Heart left ventricle (tissue), 16 donors: ENCODE measurements at regions of chr15 and their contacts with region 1.

Region 1: GRCh38 chr15:56491110-56491722 is 26.3 kb upstream of the MNS1 start:
- DNase-seq: peak; percentile 29 to 60 (median 42)
- ATAC-seq: peak in 2 of 4 donors; percentile 59 to 76
- H3K4me3 ChIP-seq: no peak overlapping the region
- H3K27ac ChIP-seq: no peak overlapping the region
- H3K4me1 ChIP-seq: no peaks in the 10 kb centered on the region
- H3K27me3 ChIP-seq: no peaks in the 10 kb centered on the region
- CTCF ChIP-seq: peak; percentile 64 to 90 (median 76)
- POLR2A ChIP-seq: no peak

Region 2: DNA sequence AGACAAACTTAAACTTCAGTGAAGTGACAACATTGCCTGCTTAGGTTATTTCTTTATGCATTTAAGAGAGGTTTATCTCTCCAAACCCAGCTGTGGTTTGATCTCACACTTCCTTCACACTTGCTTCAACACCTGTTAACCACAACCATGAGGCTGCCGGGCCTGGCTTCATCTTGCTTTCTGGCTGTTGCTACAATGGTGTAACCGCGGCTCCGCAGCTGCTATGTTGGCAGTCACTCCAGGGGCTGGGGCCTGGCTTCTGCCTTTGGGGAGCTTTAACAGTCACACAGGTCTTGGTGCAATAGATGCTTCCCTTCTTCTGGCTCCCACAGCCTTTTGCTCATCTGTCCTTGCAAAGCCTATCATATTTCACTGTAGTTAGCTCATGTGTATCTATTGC is 46.7 kb after region 1 on chr15:
- intact Hi-C with region 1: loop called in 1 of 10 experiments (anchors 5 kb)
- DNase-seq: peak in 1 of 5 donors; percentile 65
- ATAC-seq: no peak
- H3K4me3 ChIP-seq: no peak overlapping the region
- H3K27ac ChIP-seq: no peak overlapping the region
- H3K4me1 ChIP-seq: no peaks in the 10 kb centered on the region
- H3K27me3 ChIP-seq: no peaks in the 10 kb centered on the region
- CTCF ChIP-seq: no peak
- POLR2A ChIP-seq: no peak

Region 3: GRCh38 chr15:57138349-57138788 is 647.2 kb after region 1 on chr15:
- intact Hi-C with region 1: loop called in 2 of 10 experiments (anchors 10 kb)
- DNase-seq: peak in 1 of 5 donors; percentile 31
- ATAC-seq: peak; percentile 53 to 82 (median 78)
- H3K4me3 ChIP-seq: no peak overlapping the region
- H3K27ac ChIP-seq: no peak overlapping the region
- H3K4me1 ChIP-seq: peaks cover 0 to 56% (median 41%) of the 10 kb centered on the region in 12 donors
- H3K27me3 ChIP-seq: no peaks in the 10 kb centered on the region
- CTCF ChIP-seq: peak; percentile 60 to 86 (median 78)
- POLR2A ChIP-seq: no peak

Region 4: DNA sequence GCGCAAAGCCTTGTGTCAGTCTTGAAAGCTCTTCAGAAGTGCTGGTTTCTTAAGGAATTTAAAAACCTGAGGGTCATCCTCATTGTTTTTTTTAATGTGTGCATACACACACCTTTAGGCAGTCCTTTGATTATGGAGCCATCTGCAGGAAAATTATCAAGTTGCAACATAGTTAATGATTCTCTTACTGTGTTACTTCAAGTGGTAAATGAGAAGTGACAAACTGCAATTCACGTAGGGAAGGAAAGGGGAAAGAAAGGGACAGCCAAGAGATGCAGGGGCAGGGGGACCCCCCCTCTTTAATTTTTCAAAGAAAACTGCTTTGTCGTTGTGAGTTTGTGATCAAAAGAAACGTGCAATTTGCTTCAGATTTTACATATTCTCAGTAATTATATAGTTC is 722.6 kb after region 1 on chr15:
- intact Hi-C with region 1: loop called in 3 of 10 experiments (anchors 10 kb)
- DNase-seq: no peak
- ATAC-seq: peak; percentile 47 to 68 (median 60)
- H3K4me3 ChIP-seq: no peak overlapping the region
- H3K27ac ChIP-seq: no peak overlapping the region
- H3K4me1 ChIP-seq: peaks cover 0 to 67% (median 22%) of the 10 kb centered on the region in 12 donors
- H3K27me3 ChIP-seq: no peaks in the 10 kb centered on the region
- CTCF ChIP-seq: peak; percentile 30 to 73 (median 64)
- POLR2A ChIP-seq: no peak

Region 5: DNA sequence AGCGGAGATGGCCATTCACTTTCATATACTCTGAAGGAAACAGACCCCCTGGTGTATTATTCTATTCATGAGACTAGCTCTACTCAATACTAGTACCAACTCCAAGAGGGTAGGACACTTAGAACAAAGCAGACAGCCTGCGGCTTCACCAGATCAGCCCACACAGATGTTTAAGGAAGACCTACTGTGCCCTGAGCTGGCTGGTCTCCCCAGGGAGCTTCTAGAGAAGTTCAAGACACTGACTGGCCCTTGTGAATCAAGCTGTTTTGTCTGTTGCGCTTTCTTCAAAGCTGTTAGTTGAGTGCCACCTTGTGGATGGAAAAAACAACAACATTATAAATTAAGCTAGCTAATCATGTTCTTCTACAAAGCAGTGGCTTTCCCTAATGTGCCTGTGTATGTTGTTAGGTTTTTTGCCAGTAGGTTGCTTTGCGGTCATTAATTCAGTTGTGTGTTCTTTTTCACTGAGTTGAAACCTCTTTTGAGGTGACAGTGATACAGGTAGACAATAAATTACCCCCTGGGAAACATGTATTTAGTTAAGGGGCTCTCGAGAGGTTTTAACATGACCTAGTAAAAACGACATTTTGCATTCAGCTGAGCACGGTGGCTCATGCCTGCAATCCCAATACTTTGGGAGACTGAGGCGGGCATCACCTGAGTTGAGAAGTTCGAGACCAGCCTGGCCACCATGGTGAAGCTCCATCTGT is 1036.3 kb after region 1 on chr15:
- intact Hi-C with region 1: loop called in 3 of 10 experiments (anchors 10 kb)
- DNase-seq: peak in 2 of 5 donors; percentile 51 to 55
- ATAC-seq: peak in 3 of 4 donors; percentile 67 to 76 (median 76)
- H3K4me3 ChIP-seq: no peak overlapping the region
- H3K27ac ChIP-seq: no peak overlapping the region
- H3K4me1 ChIP-seq: peaks cover 0 to 14% (median 3%) of the 10 kb centered on the region in 12 donors
- H3K27me3 ChIP-seq: no peaks in the 10 kb centered on the region
- CTCF ChIP-seq: peak; percentile 49 to 80 (median 66)
- POLR2A ChIP-seq: no peak